Dendritic cell treated with granulocyte-macrophage colony-stimulating factor and Interleukin-4, amounts not matched to agents 40 ng/mL and 50 ng/mL, for 4 days (primary cell): ENCODE measurements at regions of chr5 and their contacts with region 1.

Region 1: DNA sequence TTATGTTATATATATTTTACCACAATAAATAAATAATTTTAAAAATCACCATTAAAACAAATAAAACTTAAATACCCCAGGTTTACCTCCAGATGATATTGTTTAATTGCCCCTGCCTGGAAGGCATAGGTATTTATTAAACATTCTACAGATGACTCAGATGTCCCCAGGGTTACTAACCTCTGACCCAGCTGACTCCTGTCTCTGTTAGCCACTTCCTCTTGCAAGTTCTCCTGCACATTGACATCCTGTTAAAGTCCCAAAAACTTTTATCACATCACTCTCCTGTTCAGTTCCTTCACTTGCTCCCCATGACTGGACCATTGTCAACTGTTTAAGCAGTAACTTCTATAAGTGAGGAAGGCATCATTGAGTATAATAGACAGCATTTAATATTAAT is 37.0 kb upstream of the RAB3C start:
- H3K4me3 Mint-ChIP-seq: no peak overlapping the region
- H3K27ac Mint-ChIP-seq: peak overlapping the region; percentile 70
- H3K4me1 Mint-ChIP-seq: peaks cover 51% of the 10 kb centered on the region
- H3K27me3 Mint-ChIP-seq: no peaks in the 10 kb centered on the region

Region 2: GRCh38 chr5:58505971-58506640 is 39.8 kb before region 1 on chr5:
- intact Hi-C with region 1: loop called (anchors 5 kb)
- H3K4me3 Mint-ChIP-seq: no peak overlapping the region
- H3K27ac Mint-ChIP-seq: peak overlapping the region; percentile 40
- H3K4me1 Mint-ChIP-seq: peaks cover 34% of the 10 kb centered on the region
- H3K27me3 Mint-ChIP-seq: no peaks in the 10 kb centered on the region

Region 3: GRCh38 chr5:58828258-58828657 is 282.3 kb after region 1 on chr5:
- intact Hi-C with region 1: no loop called
- H3K4me3 Mint-ChIP-seq: no peak overlapping the region
- H3K27ac Mint-ChIP-seq: no peak overlapping the region
- H3K4me1 Mint-ChIP-seq: no peaks in the 10 kb centered on the region
- H3K27me3 Mint-ChIP-seq: peaks cover 1% of the 10 kb centered on the region